Mammary epithelial cell (primary cell): ENCODE measurements at regions of chr4 and their contacts with region 1.

Region 1: DNA sequence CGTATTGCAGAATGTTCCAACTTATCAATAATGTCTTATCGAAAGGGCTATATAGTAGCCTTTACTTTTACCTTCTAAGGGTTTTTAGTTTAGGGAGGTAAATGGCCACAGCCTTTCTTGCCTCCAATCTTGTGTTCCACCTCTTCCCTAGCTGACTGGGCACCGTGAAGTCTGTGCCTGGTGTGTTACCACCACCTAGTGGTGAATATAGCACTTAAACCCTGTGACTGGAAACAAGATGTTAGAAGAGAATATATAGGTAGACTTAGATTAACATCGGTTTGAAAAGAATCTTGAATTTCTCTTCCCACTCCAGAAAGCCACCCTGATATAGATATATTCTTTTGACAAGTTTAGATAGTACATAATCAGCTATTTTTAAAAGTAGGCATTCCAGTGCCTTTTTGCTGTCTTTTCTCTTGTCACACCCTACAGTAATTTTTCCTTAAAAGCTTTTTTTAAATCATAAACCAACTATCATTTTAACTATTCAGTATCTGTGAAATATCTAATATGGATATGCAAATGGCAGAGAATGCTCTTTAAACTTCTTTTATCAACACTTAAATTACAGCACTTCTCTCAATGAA is 27.8 kb upstream of the ADH7 start:
- DNase-seq: peak; percentile 72
- H3K4me3 ChIP-seq: no peak overlapping the region
- H3K27ac ChIP-seq: peak overlapping the region; percentile 28
- H3K4me1 ChIP-seq: peaks cover 22% of the 10 kb centered on the region
- H3K27me3 ChIP-seq: no peaks in the 10 kb centered on the region
- CTCF ChIP-seq: peak; percentile 76 to 90

Region 2: GRCh38 chr4:98150092-98150761 is 1312.7 kb before region 1 on chr4:
- CTCF ChIA-PET with region 1: no interaction called
- dilution Hi-C with region 1: no loop called
- in situ Hi-C with region 1: no loop called
- intact Hi-C with region 1: loop called (anchors 5 kb)
- DNase-seq: no peak
- H3K4me3 ChIP-seq: no peak overlapping the region
- H3K27ac ChIP-seq: no peak overlapping the region
- H3K4me1 ChIP-seq: no peaks in the 10 kb centered on the region
- H3K27me3 ChIP-seq: no peaks in the 10 kb centered on the region
- CTCF ChIP-seq: peak in 1 of 2 donors; percentile 14

Region 3: GRCh38 chr4:99088481-99089365 is 374.2 kb before region 1 on chr4 and contains the start of gene ADH5:
- CTCF ChIA-PET with region 1: no interaction called
- dilution Hi-C with region 1: no loop called
- in situ Hi-C with region 1: no loop called
- intact Hi-C with region 1: loop called (anchors 2 kb)
- DNase-seq: peak; percentile 80
- H3K4me3 ChIP-seq: peak within 1 kb of the TSS; percentile 65 to 97 (median 84)
- H3K27ac ChIP-seq: peak within 1 kb of the TSS; percentile 94
- H3K4me1 ChIP-seq: peaks cover 22% of the 10 kb centered on the region
- H3K27me3 ChIP-seq: no peaks in the 10 kb centered on the region
- CTCF ChIP-seq: no peak
- total RNA-seq, gene ADH5: 192 to 237 TPM

Region 4: DNA sequence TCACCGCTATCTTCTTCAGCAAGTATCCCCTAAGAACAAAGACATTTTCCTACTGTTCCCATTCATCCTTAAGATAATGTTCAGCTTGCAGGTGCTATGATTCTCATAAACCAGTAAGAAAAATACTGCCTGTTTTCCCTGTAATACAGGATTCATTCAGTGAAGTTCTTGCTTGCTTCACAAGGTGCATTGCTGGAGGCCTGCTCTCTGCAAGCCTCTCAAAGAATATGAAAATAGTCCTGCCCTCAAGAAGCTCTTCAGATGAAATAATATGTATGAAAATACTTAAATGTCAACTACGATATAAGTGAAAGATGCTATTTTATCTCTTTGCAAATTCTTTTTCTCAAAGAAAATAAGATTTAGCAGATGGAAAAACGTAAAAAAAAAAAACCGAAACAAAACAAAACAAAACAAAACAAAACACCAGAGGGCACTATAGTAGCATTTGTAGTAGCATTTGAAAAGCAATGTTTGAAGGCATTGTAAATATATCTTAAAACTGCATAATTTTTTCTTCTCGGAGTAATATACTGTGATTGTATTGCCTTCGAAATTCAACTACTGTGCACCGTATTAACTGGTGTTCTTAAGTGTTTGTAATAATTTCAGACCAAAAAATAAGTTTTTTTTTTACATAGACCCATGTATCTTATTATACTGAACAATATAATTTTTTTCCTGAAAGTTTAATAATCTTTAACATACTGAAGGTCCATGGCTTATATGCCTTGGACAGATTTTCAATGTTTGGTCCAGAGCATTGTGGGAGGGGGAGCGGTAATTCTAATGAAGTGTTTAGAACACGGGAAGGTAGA is 344.9 kb before region 1 on chr4:
- CTCF ChIA-PET with region 1: no interaction called
- dilution Hi-C with region 1: no loop called
- in situ Hi-C with region 1: loop called in 1 of 2 experiments (anchors 10 kb)
- intact Hi-C with region 1: loop called (anchors 1 kb)
- DNase-seq: no peak
- H3K4me3 ChIP-seq: no peak overlapping the region
- H3K27ac ChIP-seq: no peak overlapping the region
- H3K4me1 ChIP-seq: no peaks in the 10 kb centered on the region
- H3K27me3 ChIP-seq: no peaks in the 10 kb centered on the region
- CTCF ChIP-seq: peak in 1 of 2 donors; percentile 25

Region 5: GRCh38 chr4:99201690-99202089 is 261.3 kb before region 1 on chr4:
- CTCF ChIA-PET with region 1: no interaction called
- dilution Hi-C with region 1: no loop called
- in situ Hi-C with region 1: no loop called
- intact Hi-C with region 1: loop called (anchors 1 kb)
- DNase-seq: no peak
- H3K4me3 ChIP-seq: no peak overlapping the region
- H3K27ac ChIP-seq: no peak overlapping the region
- H3K4me1 ChIP-seq: no peaks in the 10 kb centered on the region
- H3K27me3 ChIP-seq: no peaks in the 10 kb centered on the region
- CTCF ChIP-seq: peak in 1 of 2 donors; percentile 20

Region 6: GRCh38 chr4:99414389-99414788 is 48.6 kb before region 1 on chr4:
- CTCF ChIA-PET with region 1: interaction called, 4 read pairs
- dilution Hi-C with region 1: no loop called
- in situ Hi-C with region 1: no loop called
- intact Hi-C with region 1: loop called (anchors 1 kb)
- DNase-seq: no peak
- H3K4me3 ChIP-seq: no peak overlapping the region
- H3K27ac ChIP-seq: no peak overlapping the region
- H3K4me1 ChIP-seq: no peaks in the 10 kb centered on the region
- H3K27me3 ChIP-seq: no peaks in the 10 kb centered on the region
- CTCF ChIP-seq: no peak